ENCODE measurements at regions of chr7 and their contacts with region 1.

Region 1: GRCh38 chr7:16727736-16728135 is 25.8 kb upstream of the TSPAN13 start:
- DNase-seq: no peak
- H3K4me3 ChIP-seq: no peak overlapping the region
- H3K27ac ChIP-seq: no peak overlapping the region
- H3K4me1 ChIP-seq: no peaks in the 10 kb centered on the region
- H3K27me3 ChIP-seq: no peaks in the 10 kb centered on the region
- CTCF ChIP-seq: no peak
- POLR2A ChIP-seq: no peak

Region 2: GRCh38 chr7:16504016-16504415 is 223.7 kb before region 1 on chr7:
- CTCF ChIA-PET with region 1: no interaction called
- POLR2A ChIA-PET with region 1: no interaction called
- dilution Hi-C with region 1: no loop called
- intact Hi-C with region 1: no loop called
- DNase-seq: no peak
- H3K4me3 ChIP-seq: no peak overlapping the region
- H3K27ac ChIP-seq: no peak overlapping the region
- H3K4me1 ChIP-seq: no peaks in the 10 kb centered on the region
- H3K27me3 ChIP-seq: no peaks in the 10 kb centered on the region
- CTCF ChIP-seq: no peak
- POLR2A ChIP-seq: no peak

Region 3: GRCh38 chr7:16739863-16740622 is 12.3 kb after region 1 on chr7:
- CTCF ChIA-PET with region 1: no interaction called
- POLR2A ChIA-PET with region 1: no interaction called
- dilution Hi-C with region 1: no loop called
- intact Hi-C with region 1: loop called (anchors 2 kb)
- DNase-seq: peak; percentile 88
- H3K4me3 ChIP-seq: no peak overlapping the region
- H3K27ac ChIP-seq: peak overlapping the region; percentile 40
- H3K4me1 ChIP-seq: peaks cover 36% of the 10 kb centered on the region
- H3K27me3 ChIP-seq: no peaks in the 10 kb centered on the region
- CTCF ChIP-seq: no peak
- POLR2A ChIP-seq: no peak

Measured in endothelial cell of umbilical vein (primary cell).